T-cell (primary cell): ENCODE measurements at regions of chr2 and their contacts with region 1.

Region 1: DNA sequence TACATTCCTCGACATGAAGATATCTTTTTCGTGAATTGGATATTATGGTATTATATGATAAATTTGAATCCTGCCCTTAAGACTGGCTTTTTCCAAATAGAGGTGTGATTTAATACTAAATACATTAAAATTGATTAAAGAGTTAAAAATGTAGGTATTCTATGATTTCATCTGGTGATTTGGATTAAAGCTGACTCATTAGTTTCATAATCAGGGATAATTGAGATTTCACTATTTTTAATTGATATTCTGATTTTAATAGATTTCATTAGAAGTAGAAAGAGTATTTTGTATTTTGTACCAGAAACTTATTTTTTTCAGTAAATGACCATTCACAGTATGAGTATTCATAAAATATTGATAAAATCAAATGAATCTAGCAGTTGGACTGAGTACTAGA is 524.1 kb downstream of the PLCL1 start:
- DNase-seq: no peak
- ATAC-seq: no peak
- H3K4me3 ChIP-seq: no peak overlapping the region
- H3K4me3 Mint-ChIP-seq: no peak overlapping the region
- H3K27ac ChIP-seq: no peak overlapping the region
- H3K27ac Mint-ChIP-seq: no peak overlapping the region
- H3K4me1 ChIP-seq: peaks cover 0 to 8% of the 10 kb centered on the region in 2 experiments
- H3K4me1 Mint-ChIP-seq: peaks cover 25 to 29% (median 27%) of the 10 kb centered on the region in 3 donors
- H3K27me3 ChIP-seq: peaks cover 5 to 6% of the 10 kb centered on the region in 2 experiments
- H3K27me3 Mint-ChIP-seq: peaks cover 22 to 34% of the 10 kb centered on the region in 2 donors

Region 2: DNA sequence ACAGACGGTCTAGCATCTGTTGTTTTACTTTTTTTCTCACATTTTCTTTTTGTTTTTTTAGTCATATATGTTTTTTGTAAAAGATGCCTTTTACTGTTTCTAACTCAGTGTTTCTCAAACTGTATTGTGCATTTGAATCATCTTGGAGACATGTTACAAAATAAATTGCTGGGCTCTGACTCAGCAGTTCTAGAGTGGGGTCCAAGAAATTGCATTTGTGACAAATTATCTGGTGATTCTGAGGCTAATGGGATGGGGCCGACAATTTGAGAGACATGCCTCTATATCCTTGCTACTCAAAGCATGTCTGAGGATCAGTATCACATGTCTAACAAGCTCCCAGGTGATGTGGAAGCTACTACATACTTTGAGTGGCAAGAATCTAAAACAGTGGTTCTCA is 45.3 kb before region 1 on chr2:
- CTCF ChIA-PET with region 1: no interaction called
- POLR2A ChIA-PET with region 1: no interaction called
- DNase-seq: no peak
- ATAC-seq: no peak
- H3K4me3 ChIP-seq: no peak overlapping the region
- H3K4me3 Mint-ChIP-seq: no peak overlapping the region
- H3K27ac ChIP-seq: no peak overlapping the region
- H3K27ac Mint-ChIP-seq: no peak overlapping the region
- H3K4me1 ChIP-seq: no peaks in the 10 kb centered on the region
- H3K4me1 Mint-ChIP-seq: no peaks in the 10 kb centered on the region
- H3K27me3 ChIP-seq: peaks cover 0 to 5% of the 10 kb centered on the region in 2 experiments
- H3K27me3 Mint-ChIP-seq: peaks cover 24 to 25% of the 10 kb centered on the region in 2 donors

Region 3: GRCh38 chr2:198296665-198297308 is 31.7 kb before region 1 on chr2:
- CTCF ChIA-PET with region 1: interaction called in 1 of 2 experiments, 18 read pairs
- POLR2A ChIA-PET with region 1: no interaction called
- DNase-seq: peak in 31 of 35 experiments; percentile 19 to 79 (median 44)
- ATAC-seq: peak; percentile 76 to 87 (median 80)
- H3K4me3 ChIP-seq: no peak overlapping the region
- H3K4me3 Mint-ChIP-seq: no peak overlapping the region
- H3K27ac ChIP-seq: no peak overlapping the region
- H3K27ac Mint-ChIP-seq: no peak overlapping the region
- H3K4me1 ChIP-seq: no peaks in the 10 kb centered on the region
- H3K4me1 Mint-ChIP-seq: peaks cover 0 to 4% (median 3%) of the 10 kb centered on the region in 3 donors
- H3K27me3 ChIP-seq: peaks cover 0 to 17% of the 10 kb centered on the region in 2 experiments
- H3K27me3 Mint-ChIP-seq: peaks cover 11 to 14% of the 10 kb centered on the region in 2 donors